Left cardiac atrium (tissue), 4 donors: ENCODE measurements at regions of chr6 and their contacts with region 1.

Region 1: DNA sequence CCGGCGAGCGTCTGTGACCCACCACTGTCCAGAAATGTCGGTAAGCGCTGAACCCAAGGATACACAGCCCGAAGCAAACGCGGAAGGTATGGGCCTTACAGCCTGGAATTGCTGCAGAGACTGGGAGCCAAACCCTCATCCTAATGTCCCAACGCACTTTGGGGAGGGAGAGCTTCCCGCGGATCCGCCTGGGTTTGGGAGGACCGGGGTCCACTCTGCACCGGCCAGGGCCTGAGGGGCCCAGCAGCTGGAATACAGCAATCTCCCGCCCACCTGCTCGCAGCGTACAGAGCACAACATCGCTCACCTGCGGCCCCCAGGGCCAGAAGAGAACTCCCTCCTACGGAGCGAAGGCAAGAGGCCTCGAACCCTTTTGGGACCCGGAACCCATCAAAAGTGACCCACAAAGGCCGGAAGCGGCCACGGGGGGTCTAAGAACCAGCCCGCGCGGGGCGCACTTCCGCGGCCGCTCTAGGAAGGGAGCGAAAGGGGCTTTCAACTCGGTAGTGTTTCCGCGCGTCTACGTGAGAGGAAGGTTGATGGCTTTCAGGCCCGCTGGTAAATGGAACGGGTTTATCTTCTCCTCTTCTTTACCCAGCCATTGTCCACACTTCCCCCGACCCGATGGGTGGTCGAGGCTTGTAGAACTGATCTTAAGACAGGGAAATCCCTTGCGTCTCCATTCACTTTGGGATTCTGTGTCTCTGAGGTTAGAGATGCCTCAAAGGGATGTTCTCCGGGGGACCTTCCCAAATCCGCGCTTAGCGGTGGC is at the start of gene ZSCAN12:
- DNase-seq: peak; percentile 88
- ATAC-seq: peak; percentile 97 to 98
- total RNA-seq, gene ZSCAN12: 2.6 to 3.7 TPM

Region 2: GRCh38 chr6:28443112-28443773 is 43.7 kb after region 1 on chr6 and contains the start of gene ZSCAN23:
- intact Hi-C with region 1: loop called in 1 of 2 experiments (anchors 5 kb)
- DNase-seq: peak; percentile 90
- ATAC-seq: peak; percentile 98
- total RNA-seq, gene ZSCAN23: 1.1 to 1.2 TPM

Region 3: GRCh38 chr6:28977341-28978132 is 578.0 kb after region 1 on chr6:
- intact Hi-C with region 1: no loop called
- DNase-seq: peak; percentile 39
- ATAC-seq: no peak